ENCODE measurements at regions of chr21 and their contacts with region 1.

Region 1: DNA sequence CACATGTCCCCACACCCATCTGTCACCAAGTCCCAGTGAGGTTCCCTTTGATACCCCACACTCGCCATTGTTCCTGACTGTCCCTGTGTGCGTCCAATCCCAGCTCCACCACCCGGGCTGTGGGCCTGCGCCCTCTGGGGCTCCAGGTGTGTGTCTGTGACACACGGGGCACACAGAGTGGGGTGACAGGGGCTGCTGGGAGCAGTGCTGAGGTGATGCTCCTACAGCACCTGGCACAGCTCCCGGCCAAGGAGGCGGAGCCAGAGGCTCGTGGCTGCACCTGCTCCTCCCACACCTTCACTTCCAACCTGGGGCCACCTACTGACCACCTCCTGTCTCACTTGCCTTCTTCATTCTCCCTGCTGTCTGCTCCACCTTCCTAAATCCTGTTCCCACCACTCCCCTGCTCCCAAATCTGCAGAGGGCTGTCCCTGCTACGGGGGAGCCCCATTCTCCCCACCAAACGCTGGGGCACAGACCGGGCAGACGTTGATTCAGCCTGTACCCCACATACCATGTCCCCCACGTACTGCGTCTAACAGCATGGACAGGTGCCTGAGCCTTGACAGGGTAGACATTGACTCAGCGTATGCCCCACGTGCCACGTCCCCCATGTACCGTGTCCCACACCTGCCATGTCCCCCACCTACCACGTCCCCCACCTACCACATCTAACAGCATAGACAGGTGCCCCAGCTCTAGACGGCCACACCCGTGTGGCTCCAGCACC is 16.4 kb downstream of the WDR4 start:
- DNase-seq: no peak
- ATAC-seq: peak; percentile 55
- H3K4me3 ChIP-seq: no peak overlapping the region
- H3K27ac ChIP-seq: no peak overlapping the region; the same call in 1 of the 2 replicates
- H3K4me1 ChIP-seq: no peaks in the 10 kb centered on the region
- H3K27me3 ChIP-seq: no peaks in the 10 kb centered on the region
- CTCF ChIP-seq: no peak
- POLR2A ChIP-seq: no peak
- RAD21 ChIP-seq: no peak

Region 2: GRCh38 chr21:41885341-41886029 is 977.5 kb before region 1 on chr21:
- CTCF ChIA-PET with region 1: no interaction called
- POLR2A ChIA-PET with region 1: no interaction called
- RAD21 ChIA-PET with region 1: no interaction called
- intact Hi-C with region 1: loop called (anchors 10 kb)
- DNase-seq: no peak
- ATAC-seq: no peak
- H3K4me3 ChIP-seq: no peak overlapping the region
- H3K27ac ChIP-seq: no peak overlapping the region
- H3K4me1 ChIP-seq: peaks cover 0 to 5% of the 10 kb centered on the region in 2 experiments; a peak in 1 of 4 replicates
- H3K27me3 ChIP-seq: no peaks in the 10 kb centered on the region
- CTCF ChIP-seq: no peak
- POLR2A ChIP-seq: no peak
- RAD21 ChIP-seq: no peak

Region 3: DNA sequence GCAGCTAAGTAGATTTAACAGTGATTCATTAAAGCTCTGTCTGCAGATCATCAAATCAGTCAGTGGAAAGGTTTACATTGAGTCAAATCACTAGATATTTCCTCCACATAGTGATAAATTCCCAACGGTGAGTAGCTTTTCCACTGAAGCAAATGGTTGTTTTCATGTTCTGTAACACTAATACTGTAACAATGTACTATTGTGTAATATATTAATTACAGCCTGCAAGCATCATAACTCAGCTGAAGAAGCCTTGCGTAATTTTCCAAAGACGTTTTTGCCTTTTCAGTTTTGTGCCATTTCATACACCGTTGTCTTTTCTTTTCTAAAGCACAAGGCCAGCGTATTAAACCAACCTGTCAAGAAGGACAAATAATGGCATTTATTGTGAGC is 226.4 kb before region 1 on chr21:
- CTCF ChIA-PET with region 1: no interaction called
- POLR2A ChIA-PET with region 1: no interaction called
- RAD21 ChIA-PET with region 1: no interaction called
- intact Hi-C with region 1: no loop called
- DNase-seq: no peak
- ATAC-seq: no peak
- H3K4me3 ChIP-seq: no peak overlapping the region
- H3K27ac ChIP-seq: no peak overlapping the region
- H3K4me1 ChIP-seq: peaks cover 4 to 12% of the 10 kb centered on the region in 2 experiments
- H3K27me3 ChIP-seq: 0 out of 2 replicates have a peak, but pooled peaks cover 4% of the 10 kb centered on the region
- CTCF ChIP-seq: no peak
- POLR2A ChIP-seq: no peak
- RAD21 ChIP-seq: no peak

Region 4: DNA sequence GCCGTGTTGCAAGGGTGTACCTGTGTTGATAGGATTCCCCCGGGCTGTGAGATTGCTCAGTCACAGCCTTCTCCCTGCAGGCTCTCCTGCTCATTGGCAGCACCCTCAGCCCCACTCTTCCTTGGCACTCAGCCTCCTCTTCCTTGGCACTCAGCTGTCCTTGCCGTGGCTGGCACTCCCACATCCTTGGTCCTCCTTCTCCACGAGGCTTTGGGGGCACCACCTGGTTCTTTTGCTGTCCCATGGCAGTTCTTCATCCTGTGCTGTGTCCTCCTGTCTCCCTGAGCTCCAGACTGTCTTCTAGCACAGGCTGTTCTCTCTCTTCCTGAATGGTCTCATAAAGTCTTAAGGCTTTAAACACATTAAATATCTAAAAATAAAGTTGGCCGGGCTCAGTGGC is 138.4 kb after region 1 on chr21:
- CTCF ChIA-PET with region 1: no interaction called
- POLR2A ChIA-PET with region 1: no interaction called
- RAD21 ChIA-PET with region 1: no interaction called
- intact Hi-C with region 1: no loop called
- DNase-seq: no peak
- ATAC-seq: no peak
- H3K4me3 ChIP-seq: no peak overlapping the region
- H3K27ac ChIP-seq: no peak overlapping the region
- H3K4me1 ChIP-seq: no peaks in the 10 kb centered on the region
- H3K27me3 ChIP-seq: no peaks in the 10 kb centered on the region
- CTCF ChIP-seq: no peak
- POLR2A ChIP-seq: no peak
- RAD21 ChIP-seq: no peak